ENCODE measurements at regions of chr2 and their contacts with region 1.

Region 1: DNA sequence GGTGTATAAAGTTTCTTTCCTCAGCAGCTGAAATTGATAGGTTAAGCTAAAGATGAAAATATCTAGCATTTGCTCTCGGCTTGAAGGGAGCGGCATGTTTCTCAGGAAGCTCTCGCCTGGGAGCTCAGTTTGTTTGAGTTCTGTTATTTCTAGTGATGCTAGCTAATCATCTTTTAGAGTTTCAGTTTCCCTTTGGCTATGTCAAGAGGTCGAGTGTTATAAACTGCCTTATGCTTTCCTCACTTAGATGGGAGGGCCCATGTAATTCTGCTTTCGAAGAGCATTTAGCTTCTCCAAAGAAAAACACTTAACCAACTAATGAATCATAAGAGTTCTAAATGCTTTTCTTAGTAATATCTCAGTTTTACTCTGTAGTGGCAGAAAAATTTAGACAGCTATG is 33.6 kb downstream of the PLCL1 start:
- DNase-seq: peak in 5 of 14 experiments; percentile 8 to 74 (median 66)
- ATAC-seq: peak; percentile 87
- H3K4me3 ChIP-seq: peak overlapping the region; percentile 4
- H3K4me3 Mint-ChIP-seq: peak overlapping the region; percentile 87
- H3K27ac ChIP-seq: peak overlapping the region; percentile 6 to 47
- H3K27ac Mint-ChIP-seq: peak overlapping the region; percentile 95
- H3K4me1 ChIP-seq: peaks cover 20% of the 10 kb centered on the region
- H3K4me1 Mint-ChIP-seq: peaks cover 73% of the 10 kb centered on the region
- H3K27me3 ChIP-seq: no peaks in the 10 kb centered on the region
- H3K27me3 Mint-ChIP-seq: no peaks in the 10 kb centered on the region
- CTCF ChIP-seq: no peak

Region 2: DNA sequence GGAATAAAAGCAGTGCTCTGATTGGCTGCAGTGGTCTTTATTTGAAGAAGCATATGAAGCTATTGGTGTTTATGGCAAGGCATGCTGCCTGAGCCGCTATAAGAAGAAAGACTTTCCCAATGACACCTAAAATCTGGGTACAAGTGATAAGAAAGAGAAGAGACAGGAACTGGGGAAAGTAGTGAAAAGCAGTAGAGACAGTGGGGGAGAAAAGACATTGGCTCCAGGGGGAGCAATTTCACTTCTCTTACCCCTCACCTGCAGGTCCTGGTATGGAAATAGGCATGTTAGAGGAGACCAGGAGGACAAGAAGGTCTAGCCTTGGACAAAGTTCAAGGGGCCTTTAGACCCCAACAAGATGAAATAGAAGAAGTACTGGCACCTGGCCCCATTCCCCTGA is 13.4 kb after region 1 on chr2:
- CTCF ChIA-PET with region 1: interaction called, 5 read pairs
- POLR2A ChIA-PET with region 1: interaction called, 26 read pairs
- intact Hi-C with region 1: no loop called
- DNase-seq: peak in 4 of 14 experiments; percentile 20 to 53 (median 38)
- ATAC-seq: no peak
- H3K4me3 ChIP-seq: no peak overlapping the region
- H3K4me3 Mint-ChIP-seq: peak overlapping the region; percentile 12
- H3K27ac ChIP-seq: no peak overlapping the region
- H3K27ac Mint-ChIP-seq: peak overlapping the region; percentile 94
- H3K4me1 ChIP-seq: peaks cover 24% of the 10 kb centered on the region
- H3K4me1 Mint-ChIP-seq: peaks cover 96% of the 10 kb centered on the region
- H3K27me3 ChIP-seq: no peaks in the 10 kb centered on the region
- H3K27me3 Mint-ChIP-seq: no peaks in the 10 kb centered on the region
- CTCF ChIP-seq: peak; percentile 29

Region 3: GRCh38 chr2:197889041-197889440 is 51.0 kb after region 1 on chr2:
- CTCF ChIA-PET with region 1: no interaction called
- POLR2A ChIA-PET with region 1: interaction called, 10 read pairs
- intact Hi-C with region 1: loop called (anchors 2 to 5 kb)
- DNase-seq: peak in 7 of 14 experiments; percentile 21 to 78 (median 44)
- ATAC-seq: peak; percentile 85
- H3K4me3 ChIP-seq: no peak overlapping the region
- H3K4me3 Mint-ChIP-seq: peak overlapping the region; percentile 64
- H3K27ac ChIP-seq: peak overlapping the region in 1 of 2 donors; percentile 6
- H3K27ac Mint-ChIP-seq: peak overlapping the region; percentile 90
- H3K4me1 ChIP-seq: peaks cover 28% of the 10 kb centered on the region
- H3K4me1 Mint-ChIP-seq: peaks cover 79% of the 10 kb centered on the region
- H3K27me3 ChIP-seq: no peaks in the 10 kb centered on the region
- H3K27me3 Mint-ChIP-seq: no peaks in the 10 kb centered on the region
- CTCF ChIP-seq: no peak

Region 4: DNA sequence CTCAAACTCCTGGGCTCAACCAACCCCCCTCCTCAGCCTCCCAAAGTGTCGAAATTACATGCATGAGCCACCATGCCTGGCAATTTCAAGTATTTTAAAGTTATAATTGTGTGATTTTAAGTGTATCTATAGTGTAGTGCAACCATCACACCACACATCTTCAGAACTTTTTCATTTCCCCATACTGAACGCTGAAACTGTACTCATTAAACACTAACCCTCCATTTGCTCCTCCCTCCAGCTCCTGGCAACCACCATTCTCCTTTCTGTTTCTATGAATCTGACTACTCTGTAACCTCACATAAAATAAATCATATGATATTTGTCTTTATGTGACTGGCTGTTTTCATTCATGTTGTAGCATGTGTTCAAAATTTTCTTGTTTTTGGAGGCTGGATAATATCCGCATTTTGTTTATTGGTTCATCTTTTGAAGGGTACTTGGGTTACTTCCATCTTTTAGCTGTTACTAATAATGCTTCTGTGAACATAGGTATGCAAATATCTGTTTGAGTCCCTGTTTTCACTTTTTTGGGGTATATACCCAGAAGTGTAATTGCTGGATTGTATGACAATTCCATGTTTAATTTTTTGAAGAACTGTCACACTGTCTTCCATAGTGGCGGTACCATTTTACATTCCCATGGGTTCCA is 154.6 kb after region 1 on chr2:
- CTCF ChIA-PET with region 1: no interaction called
- POLR2A ChIA-PET with region 1: no interaction called
- intact Hi-C with region 1: loop called in 1 of 2 experiments (anchors 10 kb)
- DNase-seq: no peak
- ATAC-seq: no peak
- H3K4me3 ChIP-seq: no peak overlapping the region
- H3K4me3 Mint-ChIP-seq: no peak overlapping the region
- H3K27ac ChIP-seq: no peak overlapping the region
- H3K27ac Mint-ChIP-seq: no peak overlapping the region
- H3K4me1 ChIP-seq: peaks cover 28% of the 10 kb centered on the region
- H3K4me1 Mint-ChIP-seq: peaks cover 63% of the 10 kb centered on the region
- H3K27me3 ChIP-seq: no peaks in the 10 kb centered on the region
- H3K27me3 Mint-ChIP-seq: no peaks in the 10 kb centered on the region
- CTCF ChIP-seq: no peak